Heart right ventricle (tissue), 16 donors: ENCODE measurements at regions of chr15 and their contacts with region 1.

Region 1: DNA sequence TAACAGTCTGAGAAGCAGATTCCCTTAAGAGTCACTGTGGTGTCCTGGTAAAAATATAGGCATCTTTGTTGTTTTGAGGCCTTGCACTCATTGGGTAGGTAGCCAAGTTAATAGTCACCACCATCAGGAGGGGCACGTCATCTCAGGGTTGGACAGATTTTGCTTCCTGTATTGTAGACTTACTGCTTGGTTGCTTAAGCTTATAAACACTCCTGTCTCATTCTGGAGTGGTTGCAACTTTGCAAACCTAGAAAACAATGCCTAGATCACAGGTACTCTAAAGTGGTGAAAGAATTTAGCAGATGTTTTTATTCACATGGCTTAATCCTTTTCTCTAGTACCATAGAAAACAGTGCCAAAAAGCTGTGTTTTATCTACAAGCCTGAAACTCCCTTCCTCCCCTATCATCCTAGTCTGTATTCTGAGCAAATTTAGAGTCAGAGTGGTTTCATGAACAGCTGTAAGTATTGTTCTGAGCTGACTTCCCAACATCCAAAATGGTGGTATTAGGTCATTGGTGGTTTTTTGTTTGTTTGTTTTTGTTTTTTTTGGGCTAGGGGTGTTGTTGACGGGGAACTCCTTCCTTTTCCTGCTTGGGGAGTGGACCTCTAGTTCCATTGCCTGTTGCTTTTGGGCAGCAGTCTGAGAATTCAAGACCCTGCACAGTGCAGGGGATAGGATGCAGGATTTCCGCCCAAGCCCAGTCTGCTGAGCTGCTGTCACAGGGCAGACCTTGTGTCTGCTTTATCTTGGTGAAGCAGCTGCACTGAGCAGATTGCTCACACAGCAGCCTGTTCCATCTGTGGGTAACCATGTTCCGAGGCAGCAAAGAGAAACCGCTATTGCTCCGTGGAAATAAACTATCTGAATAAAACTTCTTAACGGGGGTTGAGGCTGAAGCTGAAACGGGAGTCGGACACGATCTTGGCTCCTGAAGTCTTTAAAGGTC is 202.0 kb downstream of the AKAP13 start:
- DNase-seq: peak; percentile 40 to 81
- ATAC-seq: peak; percentile 57 to 80 (median 68)
- H3K4me3 ChIP-seq: peak overlapping the region; percentile 28 to 65 (median 52)
- H3K27ac ChIP-seq: peak overlapping the region; percentile 73 to 93 (median 90)
- H3K4me1 ChIP-seq: peaks cover 46 to 99% (median 82%) of the 10 kb centered on the region in 9 donors
- H3K27me3 ChIP-seq: no peaks in the 10 kb centered on the region
- CTCF ChIP-seq: no peak

Region 2: GRCh38 chr15:85330901-85331588 is 251.4 kb before region 1 on chr15:
- intact Hi-C with region 1: loop called in 4 of 10 experiments (anchors 5 to 10 kb)
- DNase-seq: peak; percentile 86 to 91
- ATAC-seq: peak; percentile 86 to 97 (median 94)
- H3K4me3 ChIP-seq: peak overlapping the region in 2 of 10 donors; percentile 3 to 54
- H3K27ac ChIP-seq: peak overlapping the region; percentile 75 to 95 (median 90)
- H3K4me1 ChIP-seq: peaks cover 16 to 64% (median 48%) of the 10 kb centered on the region in 9 donors
- H3K27me3 ChIP-seq: no peaks in the 10 kb centered on the region
- CTCF ChIP-seq: peak; percentile 56 to 91 (median 84)

Region 3: GRCh38 chr15:85499371-85499887 is 83.0 kb before region 1 on chr15:
- intact Hi-C with region 1: loop called in 5 of 10 experiments (anchors 5 to 10 kb)
- DNase-seq: no peak
- ATAC-seq: peak in 1 of 8 donors; percentile 6
- H3K4me3 ChIP-seq: peak overlapping the region in 1 of 10 donors; percentile 4
- H3K27ac ChIP-seq: peak overlapping the region; percentile 16 to 90 (median 64)
- H3K4me1 ChIP-seq: peaks cover 18 to 98% (median 75%) of the 10 kb centered on the region in 9 donors
- H3K27me3 ChIP-seq: no peaks in the 10 kb centered on the region
- CTCF ChIP-seq: no peak

Region 4: GRCh38 chr15:85527895-85528294 is 54.5 kb before region 1 on chr15:
- intact Hi-C with region 1: loop called in 2 of 10 experiments (anchors 10 kb)
- DNase-seq: peak in 1 of 2 donors; percentile 79
- ATAC-seq: peak; percentile 59 to 90 (median 80)
- H3K4me3 ChIP-seq: no peak overlapping the region
- H3K27ac ChIP-seq: peak overlapping the region; percentile 5 to 81 (median 73)
- H3K4me1 ChIP-seq: peaks cover 19 to 86% (median 69%) of the 10 kb centered on the region in 9 donors
- H3K27me3 ChIP-seq: no peaks in the 10 kb centered on the region
- CTCF ChIP-seq: no peak

Region 5: GRCh38 chr15:85563328-85563727 is 19.1 kb before region 1 on chr15:
- intact Hi-C with region 1: loop called in 1 of 10 experiments (anchors 1 kb)
- DNase-seq: no peak
- ATAC-seq: peak in 7 of 8 donors; percentile 17 to 77 (median 35)
- H3K4me3 ChIP-seq: no peak overlapping the region
- H3K27ac ChIP-seq: peak overlapping the region in 4 of 10 donors; percentile 19 to 50 (median 40)
- H3K4me1 ChIP-seq: peaks cover 0 to 59% (median 40%) of the 10 kb centered on the region in 9 donors
- H3K27me3 ChIP-seq: no peaks in the 10 kb centered on the region
- CTCF ChIP-seq: no peak

Region 6: DNA sequence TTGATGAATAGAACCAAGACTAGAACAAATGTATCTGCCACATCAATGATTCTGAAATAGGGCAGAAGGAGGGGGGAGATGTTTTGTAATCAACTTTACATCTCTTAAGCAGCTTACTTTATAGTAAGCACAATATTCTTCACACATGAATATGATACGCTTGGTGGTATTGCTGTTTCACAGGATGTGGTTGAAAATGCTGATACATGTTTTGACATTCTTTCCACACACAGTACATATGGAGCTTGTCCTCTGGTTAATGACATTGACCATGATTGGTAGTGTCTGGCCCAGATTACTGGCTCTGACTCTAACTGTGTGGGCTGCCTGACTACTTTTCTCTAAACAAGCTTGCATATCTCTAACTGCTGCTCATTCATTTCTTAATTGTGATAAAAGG is 43.5 kb after region 1 on chr15:
- intact Hi-C with region 1: loop called in 2 of 10 experiments (anchors 5 kb)
- DNase-seq: no peak
- ATAC-seq: peak in 4 of 8 donors; percentile 28 to 39 (median 31)
- H3K4me3 ChIP-seq: no peak overlapping the region
- H3K27ac ChIP-seq: peak overlapping the region in 9 of 10 donors; percentile 8 to 93 (median 84)
- H3K4me1 ChIP-seq: peaks cover 21 to 98% (median 90%) of the 10 kb centered on the region in 9 donors
- H3K27me3 ChIP-seq: no peaks in the 10 kb centered on the region
- CTCF ChIP-seq: no peak